Adrenal gland (tissue), 19 donors: ENCODE measurements at regions of chr11 and their contacts with region 1.

Region 1: DNA sequence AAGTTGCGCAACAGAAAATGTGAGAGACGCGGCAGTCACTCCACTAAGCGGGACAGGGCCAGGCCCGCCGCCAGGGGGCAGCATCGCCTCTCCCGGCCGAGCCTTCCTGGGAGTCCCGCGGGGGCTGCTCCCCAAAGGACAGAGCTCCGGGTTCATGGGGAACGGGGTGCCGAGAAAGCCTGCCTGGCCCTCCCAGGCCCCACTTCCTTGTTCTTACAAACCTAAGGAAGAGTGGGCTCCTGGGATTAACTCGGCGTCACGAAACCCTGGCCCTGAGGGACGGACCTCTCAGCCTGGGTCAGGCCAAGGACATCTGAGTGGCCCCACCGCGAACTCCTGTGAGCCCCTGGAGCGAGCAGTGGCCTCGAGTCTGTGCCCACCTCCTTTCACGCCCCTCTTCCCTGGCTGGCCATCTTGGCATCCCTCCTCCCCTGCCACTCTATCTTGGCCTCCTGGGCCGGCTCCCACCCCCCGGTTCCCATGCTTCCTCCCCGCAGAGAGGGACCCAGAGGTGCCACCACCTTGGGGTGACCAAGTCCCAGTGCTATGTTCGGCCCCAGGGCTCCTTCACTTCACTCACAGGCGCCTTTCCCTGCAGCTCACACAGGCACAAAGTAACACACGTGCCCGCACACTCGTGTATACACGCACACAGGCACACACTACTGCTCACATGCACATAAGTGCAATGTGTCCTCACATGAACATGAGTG is 99.9 kb upstream of the FGF3 start:
- DNase-seq: peak; percentile 63 to 85 (median 77)
- H3K4me3 ChIP-seq: no peak overlapping the region
- H3K27ac ChIP-seq: no peak overlapping the region
- H3K4me1 ChIP-seq: peaks cover 17 to 28% of the 10 kb centered on the region in 2 donors
- H3K27me3 ChIP-seq: no peaks in the 10 kb centered on the region
- CTCF ChIP-seq: peak; percentile 70 to 94 (median 86)
- POLR2A ChIP-seq: no peak

Region 2: DNA sequence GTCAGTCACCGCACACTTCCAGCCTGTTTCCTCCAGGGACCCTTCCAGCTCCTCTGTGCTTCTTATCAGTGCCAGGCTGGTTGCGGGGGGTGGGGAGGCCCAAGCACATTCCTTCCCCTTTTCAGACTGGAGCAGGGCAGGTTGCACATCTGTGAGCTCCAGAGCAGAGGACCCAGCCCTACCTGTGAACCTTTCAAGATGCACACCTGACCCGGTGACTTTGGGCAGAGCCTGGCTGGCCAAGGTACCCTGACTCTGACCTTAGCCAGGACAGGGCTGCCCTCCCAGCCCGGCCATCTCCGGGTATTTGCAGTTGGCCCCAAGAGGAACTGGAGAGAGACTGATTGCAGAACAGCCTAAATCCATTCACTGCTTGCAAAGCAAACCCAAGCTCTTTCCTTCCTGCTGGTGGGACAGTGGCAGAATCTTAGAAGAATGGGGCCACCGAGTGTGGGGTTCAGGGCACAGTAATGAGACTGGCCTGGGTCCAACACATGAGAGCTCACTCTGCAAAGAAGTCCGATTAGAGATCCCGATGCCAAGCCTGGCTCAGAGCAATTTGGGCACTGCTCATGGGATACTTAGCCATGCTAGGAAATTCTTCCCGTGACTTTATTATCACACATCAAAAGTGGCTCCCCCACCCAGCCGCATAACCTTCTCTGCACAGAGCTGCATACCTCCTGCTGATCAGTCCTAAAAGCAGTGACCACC is 342.9 kb before region 1 on chr11:
- intact Hi-C with region 1: no loop called
- DNase-seq: peak in 1 of 7 donors; percentile 45
- H3K4me3 ChIP-seq: no peak overlapping the region
- H3K27ac ChIP-seq: no peak overlapping the region
- H3K4me1 ChIP-seq: no peaks in the 10 kb centered on the region
- H3K27me3 ChIP-seq: no peaks in the 10 kb centered on the region
- CTCF ChIP-seq: no peak
- POLR2A ChIP-seq: no peak

Region 3: GRCh38 chr11:70191495-70192140 is 272.5 kb after region 1 on chr11:
- intact Hi-C with region 1: loop called (anchors 2 to 5 kb)
- DNase-seq: peak; percentile 69 to 87 (median 84)
- H3K4me3 ChIP-seq: no peak overlapping the region
- H3K27ac ChIP-seq: no peak overlapping the region
- H3K4me1 ChIP-seq: no peaks in the 10 kb centered on the region
- H3K27me3 ChIP-seq: no peaks in the 10 kb centered on the region
- CTCF ChIP-seq: peak; percentile 84 to 92 (median 86)
- POLR2A ChIP-seq: no peak